HEK293T (cell line): ENCODE measurements at regions of chr9 and their contacts with region 1.

Region 1: DNA sequence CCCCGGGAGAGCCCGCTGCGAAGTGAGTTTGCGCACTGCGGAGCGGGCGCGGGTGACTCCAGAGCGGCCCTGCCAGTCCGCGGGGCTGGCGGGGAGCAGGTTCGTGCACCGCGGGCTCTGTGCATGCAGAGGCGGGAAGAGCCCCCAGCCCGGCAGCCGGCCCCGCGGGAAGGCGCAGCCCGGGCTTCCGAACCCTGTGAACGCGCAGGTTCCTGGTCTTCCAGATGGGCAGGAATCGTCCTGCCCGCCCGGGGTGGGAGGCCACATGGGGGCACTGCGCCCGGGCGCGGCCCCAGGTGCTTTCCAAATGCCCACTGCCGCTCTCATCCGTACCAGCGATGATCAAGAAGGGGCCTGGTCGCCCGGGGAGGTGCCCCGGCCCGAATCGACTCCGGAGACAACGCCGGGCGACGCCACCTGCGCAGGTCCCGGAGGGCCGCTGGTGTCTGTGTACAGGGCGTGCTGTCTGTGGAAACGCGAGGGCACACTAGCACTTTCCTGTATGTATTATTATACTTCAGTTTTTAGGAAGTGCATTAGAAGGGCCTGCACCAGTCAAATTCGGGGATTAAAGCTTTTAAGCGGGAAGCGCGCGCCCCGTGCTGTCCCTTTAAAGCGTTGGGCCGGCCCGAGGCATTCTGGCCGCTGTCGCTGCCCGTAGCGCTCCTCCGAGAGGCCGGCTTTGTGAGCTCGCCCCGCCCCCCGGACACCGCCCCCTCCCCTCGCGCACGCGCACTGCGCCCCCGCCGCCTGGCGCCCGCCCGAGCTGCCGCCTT is at the start of gene WDR5:
- DNase-seq: peak; percentile 99

Region 2: GRCh38 chr9:134146774-134147500 is 11.4 kb after region 1 on chr9:
- CTCF ChIA-PET with region 1: no interaction called
- POLR2A ChIA-PET with region 1: interaction called, 10 read pairs
- DNase-seq: no peak

Region 3: GRCh38 chr9:134165357-134166310 is 30.1 kb after region 1 on chr9:
- CTCF ChIA-PET with region 1: no interaction called
- POLR2A ChIA-PET with region 1: interaction called, 15 read pairs
- DNase-seq: no peak

Region 4: DNA sequence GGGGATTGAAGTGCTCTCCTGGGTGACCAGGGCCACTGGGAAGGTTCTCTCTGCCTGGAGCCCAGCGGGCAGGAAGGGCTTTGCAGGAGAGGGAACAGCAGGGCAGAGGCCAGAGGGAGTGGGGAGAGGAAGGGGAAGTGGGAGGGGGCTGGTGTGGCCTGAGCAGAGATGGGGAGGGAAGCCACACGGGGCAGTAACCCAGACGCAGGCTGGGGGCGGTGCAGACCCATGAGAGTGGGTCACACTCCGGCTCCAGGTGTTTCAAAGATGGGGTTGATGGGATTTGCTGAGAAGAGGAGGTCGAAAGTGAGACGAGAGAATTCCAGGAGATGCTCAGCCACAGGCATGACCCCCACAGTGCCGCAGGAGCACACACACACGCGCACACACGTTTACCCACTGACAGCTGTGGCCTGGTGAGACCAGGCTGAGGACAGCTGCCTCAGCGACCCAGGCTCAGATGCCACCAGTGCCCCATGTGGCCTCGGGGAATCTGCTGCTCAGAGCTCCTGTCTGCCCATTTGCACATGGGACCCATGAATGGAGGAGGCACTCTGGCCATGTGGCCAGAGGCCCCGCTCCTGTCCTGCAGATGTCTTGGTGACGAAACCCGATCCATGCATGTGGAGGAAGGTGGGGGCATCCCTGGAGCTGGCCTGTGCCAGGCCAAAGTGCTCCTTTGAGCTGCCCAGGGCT is 712.4 kb after region 1 on chr9:
- CTCF ChIA-PET with region 1: no interaction called
- POLR2A ChIA-PET with region 1: no interaction called
- DNase-seq: no peak